ENCODE measurements at regions of chr9 and their contacts with region 1.

Region 1: DNA sequence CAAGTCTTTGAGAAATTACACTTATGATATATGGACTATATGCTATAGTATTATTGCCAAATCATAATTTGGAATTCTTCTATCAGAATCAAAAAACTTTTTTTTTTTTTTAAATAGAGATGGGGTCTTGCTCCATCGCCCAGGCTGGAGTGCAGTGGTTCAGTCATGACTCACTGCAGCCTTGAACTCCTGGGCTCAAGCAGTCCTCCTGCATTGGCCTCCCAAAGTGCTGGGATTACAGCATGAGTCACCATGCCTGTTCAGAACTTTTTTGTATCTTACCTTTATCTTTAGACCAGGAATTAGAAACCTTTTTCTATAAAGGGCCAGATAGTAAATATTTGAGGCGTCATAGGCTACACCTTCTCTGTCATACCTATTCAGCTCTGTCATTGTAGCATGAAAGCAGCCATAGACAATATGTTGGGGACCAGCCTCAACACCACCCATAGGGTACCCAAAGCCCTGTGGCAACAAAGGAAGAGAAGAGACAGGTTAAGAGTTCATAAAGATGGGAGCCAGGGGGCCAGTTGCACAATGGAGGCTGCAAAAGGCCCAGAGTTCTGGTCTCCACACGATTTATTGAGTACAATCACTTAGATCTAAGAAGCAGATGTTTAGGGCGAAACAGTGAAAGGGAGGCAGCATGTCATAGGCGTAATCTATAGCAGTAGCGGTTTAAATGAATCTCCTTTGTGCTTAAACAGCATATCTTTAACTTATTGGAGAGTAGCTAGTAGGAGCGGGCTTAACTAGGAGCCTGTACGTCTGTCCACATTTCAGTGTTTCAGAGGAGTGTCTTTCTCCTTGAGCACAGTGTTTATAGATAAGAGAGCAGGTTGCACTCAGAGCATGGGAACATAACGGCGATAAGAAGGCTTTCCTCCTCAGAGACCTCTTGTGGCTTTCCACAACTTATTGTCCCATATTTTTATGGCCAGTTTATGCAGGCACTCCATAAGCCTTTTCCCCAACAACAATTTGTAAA is 12.5 kb downstream of the ECM2 start:
- DNase-seq: no peak
- ATAC-seq: no peak
- H3K4me3 ChIP-seq: no peak overlapping the region
- H3K27ac ChIP-seq: peak overlapping the region in 1 of 10 donors; percentile 14
- H3K4me1 ChIP-seq: peaks cover 0 to 24% (median 5%) of the 10 kb centered on the region in 9 donors
- H3K27me3 ChIP-seq: no peaks in the 10 kb centered on the region
- CTCF ChIP-seq: no peak

Region 2: GRCh38 chr9:92496396-92497176 is 26.7 kb before region 1 on chr9:
- intact Hi-C with region 1: no loop called
- DNase-seq: no peak
- ATAC-seq: peak in 1 of 8 donors; percentile 38
- H3K4me3 ChIP-seq: no peak overlapping the region
- H3K27ac ChIP-seq: peak overlapping the region in 1 of 10 donors; percentile 5
- H3K4me1 ChIP-seq: peaks cover 0 to 17% (median 0%) of the 10 kb centered on the region in 9 donors
- H3K27me3 ChIP-seq: no peaks in the 10 kb centered on the region
- CTCF ChIP-seq: no peak

Region 3: GRCh38 chr9:92508018-92508820 is 15.1 kb before region 1 on chr9:
- intact Hi-C with region 1: loop called in 1 of 10 experiments (anchors 2 kb)
- DNase-seq: no peak
- ATAC-seq: peak in 7 of 8 donors; percentile 17 to 51 (median 37)
- H3K4me3 ChIP-seq: peak overlapping the region in 2 of 10 donors; percentile 7 to 14
- H3K27ac ChIP-seq: peak overlapping the region in 9 of 10 donors; percentile 15 to 72 (median 37)
- H3K4me1 ChIP-seq: peaks cover 7 to 61% (median 37%) of the 10 kb centered on the region in 9 donors
- H3K27me3 ChIP-seq: no peaks in the 10 kb centered on the region
- CTCF ChIP-seq: peak in 3 of 9 donors; percentile 18 to 40 (median 30)

Region 4: GRCh38 chr9:92820964-92821363 is 297.7 kb after region 1 on chr9:
- intact Hi-C with region 1: no loop called
- DNase-seq: no peak
- ATAC-seq: no peak
- H3K4me3 ChIP-seq: no peak overlapping the region
- H3K27ac ChIP-seq: no peak overlapping the region
- H3K4me1 ChIP-seq: no peaks in the 10 kb centered on the region
- H3K27me3 ChIP-seq: peaks cover 0 to 61% (median 41%) of the 10 kb centered on the region in 7 donors
- CTCF ChIP-seq: no peak

Measured in heart right ventricle (tissue), 16 donors.